ENCODE measurements at regions of chr11 and their contacts with region 1.

Region 1: GRCh38 chr11:72711141-72711540 is 36.9 kb upstream of the PDE2A start:
- DNase-seq: no peak

Region 2: DNA sequence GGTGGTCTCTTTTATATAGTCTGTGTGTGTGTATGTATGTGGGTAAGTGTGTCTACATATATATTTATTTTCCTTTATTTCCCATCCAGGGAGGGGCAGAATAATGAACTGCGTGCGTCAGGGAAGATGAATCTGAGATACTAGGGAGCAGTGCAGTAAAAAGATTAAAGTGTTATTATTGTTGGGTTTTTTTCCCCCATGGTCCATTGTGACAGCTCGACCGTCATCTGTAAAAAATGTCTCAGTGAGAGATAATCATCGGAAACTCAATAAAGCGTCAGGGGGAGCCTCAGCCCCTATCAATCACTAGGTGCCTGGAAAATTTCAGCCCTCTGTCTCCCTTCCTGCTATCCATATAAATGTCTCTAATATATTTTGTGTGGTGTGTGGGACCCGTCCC is 341.4 kb before region 1 on chr11:
- intact Hi-C with region 1: no loop called
- DNase-seq: no peak

Region 3: DNA sequence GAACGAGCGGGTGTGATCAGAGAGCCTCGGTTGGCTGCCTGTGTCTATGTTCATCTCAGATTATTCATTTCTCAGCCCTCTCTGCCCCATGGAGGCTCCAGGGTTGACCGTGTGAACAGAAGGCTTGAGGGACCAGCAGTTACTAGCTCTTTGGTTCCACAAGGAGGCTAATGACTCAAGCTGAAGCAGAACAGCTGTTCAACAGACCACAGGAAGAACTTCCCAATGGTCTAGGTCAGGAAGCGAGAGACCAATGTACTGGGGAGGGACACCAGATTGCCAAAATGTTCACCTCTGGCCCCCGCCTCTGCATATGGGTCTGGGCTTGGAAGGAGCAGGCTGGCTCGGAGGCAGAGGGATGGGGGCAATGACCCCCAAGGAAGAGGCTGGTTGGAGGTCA is 22.2 kb before region 1 on chr11:
- intact Hi-C with region 1: loop called in 1 of 2 experiments (anchors 1 kb)
- DNase-seq: no peak